AG04449 (cell line): ENCODE measurements at regions of chr3 and their contacts with region 1.

Region 1: GRCh38 chr3:136861890-136862616 is at the start of gene NCK1:
- DNase-seq: peak; percentile 87
- H3K4me3 ChIP-seq: peak within 1 kb of the TSS; percentile 92
- CTCF ChIP-seq: no peak

Region 2: GRCh38 chr3:136720095-136720494 is 142.0 kb before region 1 on chr3:
- CTCF ChIA-PET with region 1: no interaction called
- POLR2A ChIA-PET with region 1: no interaction called
- DNase-seq: no peak
- H3K4me3 ChIP-seq: no peak overlapping the region
- CTCF ChIP-seq: no peak

Region 3: GRCh38 chr3:136838641-136839555 is 23.2 kb before region 1 on chr3:
- CTCF ChIA-PET with region 1: interaction called, 4 read pairs
- POLR2A ChIA-PET with region 1: interaction called, 11 read pairs
- DNase-seq: no peak
- H3K4me3 ChIP-seq: no peak overlapping the region
- CTCF ChIP-seq: no peak

Region 4: DNA sequence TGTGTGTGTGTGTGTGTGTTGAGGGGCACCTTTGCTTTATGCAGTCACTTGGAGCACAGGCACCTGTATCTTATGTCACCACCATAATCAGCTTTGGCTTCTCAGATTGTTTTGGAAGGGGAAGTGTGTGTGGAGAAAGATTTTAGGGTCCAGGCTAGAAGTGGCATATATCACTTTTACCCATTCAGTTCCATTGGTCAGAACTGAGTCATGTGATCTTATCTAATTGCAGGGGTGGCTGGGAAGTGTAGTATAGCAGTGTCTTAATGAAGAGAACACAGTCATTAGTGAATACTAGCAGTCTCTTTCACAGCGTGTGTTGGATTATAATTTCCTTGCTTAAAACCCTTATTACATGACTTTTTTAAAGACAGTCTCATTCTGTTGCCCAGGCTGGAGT is 20.5 kb after region 1 on chr3:
- CTCF ChIA-PET with region 1: no interaction called
- POLR2A ChIA-PET with region 1: no interaction called
- DNase-seq: no peak
- H3K4me3 ChIP-seq: no peak overlapping the region
- CTCF ChIP-seq: no peak